Motor neuron (in vitro differentiated cells): ENCODE measurements at regions of chr18 and their contacts with region 1.

Region 1: DNA sequence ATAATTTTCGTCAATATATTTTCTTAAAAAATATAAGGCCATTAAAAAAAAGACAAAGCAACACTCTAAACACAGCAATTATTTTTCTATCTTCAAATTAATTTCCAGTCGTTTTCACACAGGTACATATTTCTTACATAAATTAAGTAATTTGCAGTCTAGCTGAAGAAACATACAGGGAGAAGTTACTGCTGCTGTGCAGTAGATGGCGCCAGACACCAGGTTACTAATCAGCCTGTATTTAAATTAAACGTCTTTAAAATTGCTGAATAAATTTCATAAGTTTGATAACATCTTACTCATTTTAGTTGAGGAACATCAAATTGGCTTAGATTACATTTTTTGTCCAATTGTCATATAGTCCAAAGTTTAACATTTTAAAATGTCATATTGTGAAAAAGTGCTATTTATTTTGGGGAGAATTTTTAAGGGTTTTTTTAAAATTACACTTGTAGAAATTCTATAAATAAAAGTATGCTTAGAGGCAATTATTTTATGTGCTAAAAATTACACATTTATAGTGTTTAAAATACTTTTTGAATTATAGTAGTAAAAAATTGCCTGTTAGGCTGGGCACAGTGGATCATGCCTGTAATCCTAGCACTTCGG is 88.4 kb downstream of the PMAIP1 start:
- ATAC-seq: peak in 1 of 8 experiments; percentile 54
- H3K4me3 ChIP-seq: no peak overlapping the region
- H3K27ac ChIP-seq: no peak overlapping the region
- H3K4me1 ChIP-seq: no peaks in the 10 kb centered on the region

Region 2: GRCh38 chr18:60549338-60549960 is 561.2 kb after region 1 on chr18:
- in situ Hi-C with region 1: loop called in 8 of 9 experiments (anchors 10 to 25 kb)
- ATAC-seq: peak in 3 of 8 experiments; percentile 33 to 49 (median 34)
- H3K4me3 ChIP-seq: no peak overlapping the region
- H3K27ac ChIP-seq: no peak overlapping the region
- H3K4me1 ChIP-seq: no peaks in the 10 kb centered on the region

Region 3: GRCh38 chr18:60554967-60555366 is 566.8 kb after region 1 on chr18:
- in situ Hi-C with region 1: loop called in 2 of 9 experiments (anchors 25 kb)
- ATAC-seq: no peak
- H3K4me3 ChIP-seq: no peak overlapping the region
- H3K27ac ChIP-seq: no peak overlapping the region
- H3K4me1 ChIP-seq: no peaks in the 10 kb centered on the region